Astrocyte of the cerebellum (primary cell): ENCODE measurements at regions of chr1 and their contacts with region 1.

Region 1: GRCh38 chr1:38818175-38818976 is 41.2 kb downstream of the RRAGC start:
- DNase-seq: no peak
- H3K4me3 ChIP-seq: peak overlapping the region; percentile 24
- CTCF ChIP-seq: peak; percentile 55

Region 2: DNA sequence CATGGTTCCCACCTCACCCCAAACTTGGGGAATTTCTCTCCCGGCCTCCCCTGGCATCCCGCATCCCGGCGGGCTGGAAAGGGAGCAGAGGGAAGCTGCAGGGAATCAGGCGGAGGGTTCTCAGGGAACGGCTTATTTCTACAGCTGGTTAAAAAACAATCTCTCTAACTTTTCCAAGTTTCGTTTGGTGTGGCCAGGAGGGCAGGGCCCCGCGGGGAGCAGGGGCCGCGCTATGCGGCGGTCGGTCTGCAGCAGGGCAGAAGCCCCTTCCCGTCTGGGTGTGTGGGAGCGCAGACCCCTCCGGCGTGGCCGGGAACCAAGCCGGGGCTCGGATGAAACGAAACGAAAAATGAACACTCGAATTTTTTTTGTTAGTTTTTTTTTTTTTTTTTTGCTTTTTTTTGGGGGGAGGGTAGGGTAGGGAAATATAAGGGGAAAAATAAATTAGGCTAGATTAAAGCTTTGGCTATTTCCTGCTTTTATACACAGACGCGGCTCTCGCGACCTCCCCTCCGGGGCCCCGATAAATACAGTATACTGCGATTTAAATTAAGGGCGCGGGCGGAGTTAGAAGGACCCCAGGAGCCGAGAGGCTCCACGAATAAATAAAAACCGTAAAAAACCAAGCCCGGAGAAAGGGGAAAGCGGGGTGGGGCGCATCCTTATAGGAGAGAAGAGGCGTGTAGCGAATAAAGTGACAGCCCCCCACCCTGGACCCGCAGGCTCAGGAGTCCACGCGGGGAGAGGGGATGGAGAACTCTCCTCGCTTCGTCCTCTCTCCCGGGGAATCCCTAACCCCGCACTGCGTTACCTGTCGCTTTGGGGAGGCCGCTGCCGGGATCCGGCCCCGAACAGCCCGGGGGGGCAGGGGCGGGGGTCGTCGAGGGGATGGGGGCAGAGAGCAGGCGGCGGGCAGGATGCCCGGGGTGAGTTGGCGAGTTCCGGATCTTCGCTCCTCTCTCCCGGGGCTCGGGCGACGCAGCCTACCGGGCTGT is 773.9 kb before region 1 on chr1:
- in situ Hi-C with region 1: loop called (anchors 5 kb)
- DNase-seq: no peak
- H3K4me3 ChIP-seq: peak overlapping the region; percentile 37
- CTCF ChIP-seq: no peak

Region 3: DNA sequence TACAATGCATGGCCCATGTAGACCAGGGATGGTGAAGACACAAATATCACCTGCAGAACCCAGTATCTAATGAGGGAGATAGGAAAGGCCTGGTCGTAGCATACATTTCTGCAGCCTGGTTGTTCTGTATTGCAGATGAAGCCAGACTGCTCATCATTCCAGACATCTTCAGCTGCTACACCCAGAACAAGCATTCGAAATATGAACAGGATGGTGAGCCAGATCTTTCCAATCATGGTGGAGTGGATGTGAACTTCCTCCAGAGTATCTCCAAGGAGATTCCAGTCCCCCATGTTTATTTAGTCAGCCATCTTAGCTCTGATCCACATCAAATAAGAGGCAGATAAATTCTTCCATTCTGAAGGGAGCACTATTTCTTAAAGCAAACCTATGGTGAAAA is 57.4 kb after region 1 on chr1:
- in situ Hi-C with region 1: no loop called
- DNase-seq: no peak
- H3K4me3 ChIP-seq: no peak overlapping the region
- CTCF ChIP-seq: no peak